Heart right ventricle (tissue), 16 donors: ENCODE measurements at regions of chr5 and their contacts with region 1.

Region 1: DNA sequence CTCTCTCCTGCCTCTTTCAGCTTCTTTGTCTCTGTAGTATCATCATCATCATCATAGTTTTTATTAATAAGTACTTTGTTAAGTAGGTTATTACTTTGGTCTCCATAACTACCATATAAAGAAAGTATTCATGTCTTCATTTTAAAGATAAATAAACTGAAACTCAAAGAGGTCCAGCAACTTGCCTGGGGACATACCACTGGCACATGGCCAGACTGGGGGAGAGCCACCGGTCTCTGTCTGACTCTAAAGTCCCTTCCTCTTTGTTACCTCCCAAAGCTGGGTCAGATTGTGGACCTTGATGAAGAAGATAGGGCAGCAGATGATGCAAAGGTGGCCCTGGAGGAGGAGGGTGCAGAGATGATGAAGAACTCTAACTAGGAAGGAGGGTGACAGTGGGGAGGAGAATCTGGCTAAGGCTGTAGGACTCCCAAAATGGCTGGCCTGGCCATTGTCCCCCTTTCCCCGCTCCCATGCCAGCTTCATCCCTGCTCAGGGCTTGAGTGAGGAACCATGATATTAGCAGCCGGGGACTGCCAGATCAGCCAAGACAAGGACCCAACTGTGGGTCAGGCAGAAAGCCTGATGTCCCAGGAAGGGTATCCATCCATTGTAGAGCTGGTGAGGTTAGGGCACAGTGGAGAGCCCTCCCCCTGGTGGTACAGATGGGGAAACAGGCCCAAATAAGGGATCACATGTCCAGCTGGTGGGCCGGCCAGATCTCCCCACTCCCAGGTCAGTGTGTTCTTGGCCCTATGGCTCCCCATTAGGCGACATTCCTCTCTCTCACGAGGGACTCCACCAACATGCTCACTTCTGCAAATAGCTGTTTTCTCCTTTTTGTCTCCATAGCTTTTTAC is 8.7 kb downstream of the CDX1 start:
- DNase-seq: no peak
- ATAC-seq: no peak
- H3K4me3 ChIP-seq: no peak overlapping the region
- H3K27ac ChIP-seq: peak overlapping the region in 2 of 10 donors; percentile 1 to 21
- H3K4me1 ChIP-seq: peaks cover 3 to 26% (median 8%) of the 10 kb centered on the region in 9 donors
- H3K27me3 ChIP-seq: peaks cover 0 to under 1% (median 0%) of the 10 kb centered on the region in 7 donors
- CTCF ChIP-seq: peak in 7 of 9 donors; percentile 18 to 40 (median 34)

Region 2: DNA sequence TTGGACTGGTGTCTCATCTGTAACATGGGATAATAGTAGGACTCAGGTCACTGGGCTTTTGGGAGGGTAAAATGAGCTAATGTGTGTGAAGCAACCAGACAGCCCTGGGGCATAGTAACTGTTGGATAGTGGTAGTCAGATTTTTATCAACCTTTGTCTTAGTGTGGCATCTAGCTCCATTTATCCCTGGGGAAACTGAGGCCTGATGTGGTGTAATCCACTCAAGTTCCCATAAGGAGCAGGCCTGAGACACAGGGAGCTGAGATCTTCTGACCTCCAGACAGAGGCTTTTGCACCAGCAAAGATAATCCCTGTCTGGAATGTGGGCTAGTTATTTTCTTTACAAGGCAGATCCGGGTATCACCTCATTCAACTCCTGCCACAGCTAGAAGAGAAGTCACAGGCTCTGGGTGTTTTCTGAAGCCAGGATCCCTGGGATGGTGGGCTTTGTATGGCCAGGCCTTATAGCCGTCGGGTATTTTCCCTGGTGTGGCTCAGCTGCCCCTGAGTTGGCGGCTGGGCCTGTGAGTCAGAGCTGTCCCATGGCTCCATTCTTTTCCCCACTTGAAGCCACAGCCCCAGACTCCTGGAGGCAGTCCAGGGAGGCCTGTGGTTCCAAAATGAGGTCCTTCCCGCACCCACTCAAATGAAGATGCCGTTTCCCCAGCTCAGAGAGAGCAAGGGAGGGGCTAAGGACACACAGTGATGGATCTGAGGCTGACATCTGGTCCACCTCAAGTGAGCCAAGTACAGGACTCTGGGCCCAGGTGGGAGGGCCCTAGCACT is 62.9 kb before region 1 on chr5:
- intact Hi-C with region 1: no loop called
- DNase-seq: peak in 1 of 2 donors; percentile 57
- ATAC-seq: peak; percentile 27 to 67 (median 54)
- H3K4me3 ChIP-seq: no peak overlapping the region
- H3K27ac ChIP-seq: peak overlapping the region in 8 of 10 donors; percentile 26 to 71 (median 45)
- H3K4me1 ChIP-seq: peaks cover 0 to 40% (median 23%) of the 10 kb centered on the region in 9 donors
- H3K27me3 ChIP-seq: no peaks in the 10 kb centered on the region
- CTCF ChIP-seq: no peak

Region 3: GRCh38 chr5:150538007-150538917 is 363.0 kb after region 1 on chr5:
- intact Hi-C with region 1: loop called in 1 of 10 experiments (anchors 10 kb)
- DNase-seq: peak; percentile 47 to 55
- ATAC-seq: peak in 6 of 8 donors; percentile 40 to 68 (median 50)
- H3K4me3 ChIP-seq: no peak overlapping the region
- H3K27ac ChIP-seq: peak overlapping the region in 8 of 10 donors; percentile 3 to 96 (median 50)
- H3K4me1 ChIP-seq: peaks cover 3 to 59% (median 42%) of the 10 kb centered on the region in 9 donors
- H3K27me3 ChIP-seq: no peaks in the 10 kb centered on the region
- CTCF ChIP-seq: peak in 2 of 9 donors; percentile 9 to 14